Endothelial cell of umbilical vein (primary cell): ENCODE measurements at regions of chr17 and their contacts with region 1.

Region 1: GRCh38 chr17:80101011-80101945 is at the start of gene GAA:
- DNase-seq: peak; percentile 83
- H3K4me3 ChIP-seq: peak within 1 kb of the TSS; percentile 70 to 80 (median 72)
- H3K27ac ChIP-seq: peak within 1 kb of the TSS; percentile 32
- H3K4me1 ChIP-seq: peaks cover 10% of the 10 kb centered on the region
- H3K27me3 ChIP-seq: no peaks in the 10 kb centered on the region
- CTCF ChIP-seq: peak; percentile 74 to 94
- POLR2A ChIP-seq: peak; percentile 82
- total RNA-seq, gene GAA: 45.9 and 49.7 TPM in 2 replicates

Region 2: GRCh38 chr17:80008383-80008840 is 92.9 kb before region 1 on chr17:
- CTCF ChIA-PET with region 1: interaction called, 16 read pairs
- POLR2A ChIA-PET with region 1: no interaction called
- dilution Hi-C with region 1: no loop called
- intact Hi-C with region 1: no loop called
- DNase-seq: peak; percentile 54
- H3K4me3 ChIP-seq: no peak overlapping the region
- H3K27ac ChIP-seq: no peak overlapping the region
- H3K4me1 ChIP-seq: no peaks in the 10 kb centered on the region
- H3K27me3 ChIP-seq: no peaks in the 10 kb centered on the region
- CTCF ChIP-seq: peak; percentile 97 to 99
- POLR2A ChIP-seq: no peak

Region 3: GRCh38 chr17:80082403-80083135 is 18.7 kb before region 1 on chr17:
- CTCF ChIA-PET with region 1: interaction called, 12 read pairs
- POLR2A ChIA-PET with region 1: no interaction called
- dilution Hi-C with region 1: no loop called
- intact Hi-C with region 1: no loop called
- DNase-seq: peak; percentile 59
- H3K4me3 ChIP-seq: no peak overlapping the region
- H3K27ac ChIP-seq: no peak overlapping the region
- H3K4me1 ChIP-seq: no peaks in the 10 kb centered on the region
- H3K27me3 ChIP-seq: no peaks in the 10 kb centered on the region
- CTCF ChIP-seq: peak; percentile 50 to 84
- POLR2A ChIP-seq: no peak

Region 4: GRCh38 chr17:80113033-80113484 is 11.8 kb after region 1 on chr17:
- CTCF ChIA-PET with region 1: interaction called, 15 read pairs
- POLR2A ChIA-PET with region 1: no interaction called
- dilution Hi-C with region 1: no loop called
- intact Hi-C with region 1: no loop called
- DNase-seq: no peak
- H3K4me3 ChIP-seq: no peak overlapping the region
- H3K27ac ChIP-seq: no peak overlapping the region
- H3K4me1 ChIP-seq: no peaks in the 10 kb centered on the region
- H3K27me3 ChIP-seq: no peaks in the 10 kb centered on the region
- CTCF ChIP-seq: no peak
- POLR2A ChIP-seq: no peak

Region 5: DNA sequence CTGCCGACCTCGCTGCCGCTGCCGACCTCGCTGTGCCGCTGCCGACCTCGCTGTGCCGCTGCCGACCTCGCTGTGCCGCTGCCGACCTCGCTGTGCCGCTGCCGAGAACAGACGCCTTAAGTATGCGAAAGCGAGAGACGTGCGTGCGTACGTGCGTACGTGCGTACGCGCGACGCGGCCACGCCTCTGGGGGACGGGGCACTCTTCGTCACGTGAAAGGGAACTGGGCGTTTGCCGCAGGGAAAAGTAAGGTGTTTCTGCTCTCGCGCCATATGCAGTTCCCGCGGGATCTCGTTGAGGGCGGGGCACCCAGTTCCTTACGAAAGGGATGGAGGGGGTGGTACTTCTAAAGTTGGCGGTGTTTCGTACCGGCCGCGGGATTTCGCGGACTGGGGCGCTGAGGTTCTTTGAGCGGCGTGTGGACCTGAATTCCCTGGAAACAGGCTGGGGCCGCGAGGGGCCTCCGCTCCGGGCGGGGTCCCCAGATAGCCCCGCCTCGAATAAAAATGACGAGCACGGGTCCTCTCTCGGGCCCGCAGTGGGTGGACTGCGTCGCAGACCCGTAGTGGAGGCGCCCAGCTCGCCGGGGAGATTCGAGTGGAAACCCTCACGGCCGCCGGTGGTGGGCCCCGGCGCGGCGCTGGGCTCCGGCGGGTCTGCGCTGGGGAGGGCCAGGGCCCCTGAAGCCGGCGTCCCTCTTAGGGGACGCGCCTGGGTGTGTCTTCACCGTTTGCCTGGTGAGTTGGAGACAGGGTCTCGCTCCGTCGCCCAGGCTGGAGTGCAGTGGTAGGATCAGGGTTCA is 46.0 kb after region 1 on chr17 and contains the start of gene EIF4A3:
- CTCF ChIA-PET with region 1: interaction called, 7 read pairs
- POLR2A ChIA-PET with region 1: interaction called, 5 read pairs
- dilution Hi-C with region 1: no loop called
- intact Hi-C with region 1: loop called (anchors 1 kb)
- DNase-seq: peak; percentile 100
- H3K4me3 ChIP-seq: peak within 1 kb of the TSS; percentile 61 to 81 (median 68)
- H3K27ac ChIP-seq: peak within 1 kb of the TSS; percentile 67
- H3K4me1 ChIP-seq: peaks cover 17% of the 10 kb centered on the region
- H3K27me3 ChIP-seq: no peaks in the 10 kb centered on the region
- CTCF ChIP-seq: no peak
- POLR2A ChIP-seq: peak; percentile 75
- total RNA-seq, gene EIF4A3: 90.4 and 93.8 TPM in 2 replicates